Body of pancreas (tissue), 4 donors: ENCODE measurements at regions of chr11 and their contacts with region 1.

Region 1: GRCh38 chr11:94845622-94846021 is 77.5 kb downstream of the AMOTL1 start:
- DNase-seq: peak; percentile 72 to 85 (median 76)
- ATAC-seq: peak; percentile 99
- H3K4me3 ChIP-seq: no peak overlapping the region
- H3K27ac ChIP-seq: no peak overlapping the region
- H3K4me1 ChIP-seq: peaks cover 14% of the 10 kb centered on the region
- H3K27me3 ChIP-seq: no peaks in the 10 kb centered on the region
- CTCF ChIP-seq: no peak
- POLR2A ChIP-seq: no peak

Region 2: GRCh38 chr11:94794287-94795168 is 51.1 kb before region 1 on chr11:
- intact Hi-C with region 1: loop called (anchors 10 kb)
- DNase-seq: peak; percentile 77 to 88 (median 84)
- ATAC-seq: peak; percentile 87
- H3K4me3 ChIP-seq: no peak overlapping the region
- H3K27ac ChIP-seq: peak overlapping the region; percentile 62 to 77 (median 71)
- H3K4me1 ChIP-seq: peaks cover 74% of the 10 kb centered on the region
- H3K27me3 ChIP-seq: no peaks in the 10 kb centered on the region
- CTCF ChIP-seq: peak in 1 of 7 experiments; percentile 11
- POLR2A ChIP-seq: peak in 1 of 3 donors; percentile 20

Region 3: GRCh38 chr11:94958121-94958696 is 112.6 kb after region 1 on chr11:
- intact Hi-C with region 1: no loop called
- DNase-seq: no peak
- ATAC-seq: no peak
- H3K4me3 ChIP-seq: no peak overlapping the region
- H3K27ac ChIP-seq: no peak overlapping the region
- H3K4me1 ChIP-seq: no peaks in the 10 kb centered on the region
- H3K27me3 ChIP-seq: no peaks in the 10 kb centered on the region
- CTCF ChIP-seq: no peak
- POLR2A ChIP-seq: no peak